HepG2 (cell line): ENCODE measurements at regions of chr2 and their contacts with region 1.

Region 1: DNA sequence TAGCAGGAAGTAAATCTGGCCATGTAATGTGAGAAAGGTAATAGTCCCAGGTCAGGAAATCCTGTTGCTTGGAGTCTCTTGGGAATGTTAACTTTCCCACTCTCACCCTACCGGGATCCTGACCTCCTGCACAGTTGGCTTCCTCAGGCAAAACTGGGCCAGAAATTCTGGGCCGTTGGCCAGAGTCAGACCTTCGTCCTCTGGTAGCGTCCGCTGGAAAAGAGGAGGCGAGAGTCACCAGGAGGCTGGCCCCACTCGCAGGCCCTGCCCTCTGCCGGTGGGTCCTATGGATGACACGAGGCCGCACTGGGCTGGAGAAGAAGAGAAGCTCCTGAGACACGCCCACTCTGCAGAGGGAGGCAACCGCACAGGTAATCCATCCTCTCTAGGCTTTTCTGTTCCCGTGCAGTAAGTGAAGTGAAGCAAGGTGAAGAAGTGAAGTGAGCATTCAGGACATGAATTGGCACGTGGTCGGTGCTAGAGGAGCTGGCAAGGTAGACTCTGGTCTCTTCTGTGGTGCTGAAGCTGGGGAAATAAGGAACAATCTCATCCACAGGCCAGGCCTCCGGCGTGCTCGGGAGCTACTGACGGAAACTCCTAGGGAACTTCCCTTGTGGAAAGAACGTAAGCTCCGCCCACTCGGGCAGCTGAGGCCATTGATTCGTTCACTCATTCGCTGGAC is 182.7 kb upstream of the GLI2 start:
- DNase-seq: peak; percentile 90
- ATAC-seq: peak; percentile 91
- H3K4me3 ChIP-seq: peak overlapping the region in 1 of 3 experiments; percentile 20; a peak in 3 of 6 replicates
- H3K27ac ChIP-seq: peak overlapping the region; percentile 44
- H3K4me1 ChIP-seq: peaks cover 92% of the 10 kb centered on the region
- H3K27me3 ChIP-seq: peaks cover 6 to 19% of the 10 kb centered on the region in 2 experiments; a peak in 4 of 5 replicates
- CTCF ChIP-seq: peak; percentile 99
- EP300 ChIP-seq: peak; percentile 20 to 36; a peak in 2 of 4 replicates
- POLR2A ChIP-seq: peak in 1 of 2 experiments; percentile 50; a peak in 1 of 4 replicates
- RAD21 ChIP-seq: peak; percentile 99

Region 2: DNA sequence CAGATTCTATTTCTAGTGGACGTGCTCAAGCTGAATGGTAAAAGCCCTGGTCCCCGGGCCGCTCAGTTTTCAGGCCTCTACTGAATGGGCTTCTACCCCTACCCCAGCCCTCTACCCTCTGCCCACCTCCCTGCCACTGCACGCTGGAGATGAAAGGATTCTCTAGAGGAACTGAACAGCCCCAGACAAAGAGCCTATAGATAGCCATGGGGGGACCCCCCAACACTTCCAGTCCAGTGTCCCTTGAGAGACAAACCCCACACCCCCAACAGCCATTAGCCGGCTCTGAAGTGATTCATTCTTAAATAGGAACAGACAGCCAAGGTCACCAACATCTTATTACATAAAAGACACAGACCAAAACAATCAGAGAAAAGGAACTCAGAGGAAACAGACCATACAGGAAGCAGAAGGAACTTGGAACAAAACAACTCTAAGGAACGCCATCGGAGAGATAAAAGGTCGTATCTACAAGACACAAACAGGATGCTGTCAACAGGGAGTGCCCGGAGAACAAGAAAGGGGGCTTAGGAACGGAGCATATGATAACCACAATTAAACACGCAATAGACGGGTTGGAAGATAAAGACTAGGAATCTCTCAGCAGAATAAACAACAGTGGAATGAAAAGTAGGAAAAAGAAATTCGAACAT is 1097.7 kb before region 1 on chr2:
- CTCF ChIA-PET with region 1: no interaction called
- POLR2A ChIA-PET with region 1: no interaction called
- in situ Hi-C with region 1: no loop called
- intact Hi-C with region 1: no loop called
- DNase-seq: no peak
- ATAC-seq: no peak
- H3K4me3 ChIP-seq: no peak overlapping the region
- H3K27ac ChIP-seq: no peak overlapping the region
- H3K4me1 ChIP-seq: peaks cover 8% of the 10 kb centered on the region; the same call in 1 of the 2 replicates
- H3K27me3 ChIP-seq: peaks cover 4 to 57% of the 10 kb centered on the region in 2 experiments
- CTCF ChIP-seq: no peak
- EP300 ChIP-seq: no peak
- POLR2A ChIP-seq: no peak
- RAD21 ChIP-seq: no peak

Region 3: GRCh38 chr2:120396013-120396885 is 156.7 kb before region 1 on chr2:
- CTCF ChIA-PET with region 1: no interaction called
- POLR2A ChIA-PET with region 1: interaction called, 3 read pairs
- in situ Hi-C with region 1: no loop called
- intact Hi-C with region 1: loop called (anchors 5 kb)
- DNase-seq: peak; percentile 44
- ATAC-seq: no peak
- H3K4me3 ChIP-seq: no peak overlapping the region
- H3K27ac ChIP-seq: no peak overlapping the region
- H3K4me1 ChIP-seq: peaks cover 60% of the 10 kb centered on the region
- H3K27me3 ChIP-seq: peaks cover 0 to 3% of the 10 kb centered on the region in 2 experiments; a peak in 2 of 5 replicates
- CTCF ChIP-seq: no peak
- EP300 ChIP-seq: no peak
- POLR2A ChIP-seq: no peak
- RAD21 ChIP-seq: no peak

Region 4: GRCh38 chr2:120503793-120504571 is 49.0 kb before region 1 on chr2:
- CTCF ChIA-PET with region 1: no interaction called
- POLR2A ChIA-PET with region 1: no interaction called
- in situ Hi-C with region 1: no loop called
- intact Hi-C with region 1: loop called (anchors 5 kb)
- DNase-seq: peak; percentile 59
- ATAC-seq: peak; percentile 72
- H3K4me3 ChIP-seq: 0 out of 6 replicates have a peak overlapping the region, but pooled peaks of 1 of the 3 experiments have one; percentile 10
- H3K27ac ChIP-seq: no peak overlapping the region
- H3K4me1 ChIP-seq: peaks cover 46% of the 10 kb centered on the region
- H3K27me3 ChIP-seq: peaks cover 2 to 70% of the 10 kb centered on the region in 2 experiments; a peak in 4 of 5 replicates
- CTCF ChIP-seq: peak; percentile 42
- EP300 ChIP-seq: no peak
- POLR2A ChIP-seq: no peak
- RAD21 ChIP-seq: peak; percentile 70; the same call in 1 of the 2 replicates

Region 5: DNA sequence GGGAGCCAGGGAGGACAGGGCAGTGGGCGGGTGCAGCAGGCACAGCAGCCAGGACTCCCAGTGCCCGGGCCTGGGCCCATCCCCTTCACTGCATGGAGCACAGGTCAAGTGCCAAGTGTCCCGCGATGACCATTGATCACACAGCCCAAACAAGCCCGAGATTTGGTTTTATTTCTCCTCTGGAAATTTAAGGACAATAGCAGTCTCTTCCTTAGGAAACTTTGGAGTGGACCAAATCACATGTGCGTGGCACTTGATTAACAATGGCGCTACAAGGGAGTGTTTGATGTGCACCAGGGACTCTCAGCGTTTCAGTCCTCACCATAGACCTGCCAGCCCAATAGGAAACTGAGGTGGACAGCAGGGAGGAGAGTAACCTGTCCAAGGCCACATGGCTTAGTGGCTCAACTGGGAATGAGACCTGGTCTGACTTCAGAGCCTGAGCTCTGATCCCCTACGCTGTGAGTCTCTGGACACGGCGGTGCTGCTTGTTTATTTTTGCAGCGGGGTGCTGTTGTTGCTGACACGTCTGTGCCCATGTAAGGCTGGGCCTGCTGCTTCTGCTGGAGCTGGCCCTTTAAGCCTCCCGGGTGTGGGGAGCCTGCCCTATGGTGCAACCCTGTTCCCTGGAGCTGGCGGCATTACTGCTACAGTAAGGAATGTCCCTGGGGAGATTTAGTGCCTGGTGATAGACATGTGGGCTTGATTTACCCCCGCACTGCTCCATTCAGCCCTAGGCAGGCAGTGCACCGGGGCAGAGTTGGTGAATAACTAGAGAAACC is 12.8 kb before region 1 on chr2:
- CTCF ChIA-PET with region 1: no interaction called
- POLR2A ChIA-PET with region 1: interaction called, 34 read pairs
- in situ Hi-C with region 1: no loop called
- intact Hi-C with region 1: no loop called
- DNase-seq: peak; percentile 94
- ATAC-seq: peak; percentile 93
- H3K4me3 ChIP-seq: peak overlapping the region in 2 of 3 experiments; percentile 11 to 34; a peak in 1 of 6 replicates
- H3K27ac ChIP-seq: peak overlapping the region; percentile 82
- H3K4me1 ChIP-seq: peaks cover 73% of the 10 kb centered on the region
- H3K27me3 ChIP-seq: peaks cover 0 to 17% of the 10 kb centered on the region in 2 experiments; a peak in 3 of 5 replicates
- CTCF ChIP-seq: 0 out of 2 replicates have a peak, but pooled peaks have one; percentile 20
- EP300 ChIP-seq: peak; percentile 30 to 69; a peak in 2 of 4 replicates
- POLR2A ChIP-seq: peak; percentile 59 to 78; a peak in 3 of 4 replicates
- RAD21 ChIP-seq: peak; percentile 54; the same call in 1 of the 2 replicates

Region 6: DNA sequence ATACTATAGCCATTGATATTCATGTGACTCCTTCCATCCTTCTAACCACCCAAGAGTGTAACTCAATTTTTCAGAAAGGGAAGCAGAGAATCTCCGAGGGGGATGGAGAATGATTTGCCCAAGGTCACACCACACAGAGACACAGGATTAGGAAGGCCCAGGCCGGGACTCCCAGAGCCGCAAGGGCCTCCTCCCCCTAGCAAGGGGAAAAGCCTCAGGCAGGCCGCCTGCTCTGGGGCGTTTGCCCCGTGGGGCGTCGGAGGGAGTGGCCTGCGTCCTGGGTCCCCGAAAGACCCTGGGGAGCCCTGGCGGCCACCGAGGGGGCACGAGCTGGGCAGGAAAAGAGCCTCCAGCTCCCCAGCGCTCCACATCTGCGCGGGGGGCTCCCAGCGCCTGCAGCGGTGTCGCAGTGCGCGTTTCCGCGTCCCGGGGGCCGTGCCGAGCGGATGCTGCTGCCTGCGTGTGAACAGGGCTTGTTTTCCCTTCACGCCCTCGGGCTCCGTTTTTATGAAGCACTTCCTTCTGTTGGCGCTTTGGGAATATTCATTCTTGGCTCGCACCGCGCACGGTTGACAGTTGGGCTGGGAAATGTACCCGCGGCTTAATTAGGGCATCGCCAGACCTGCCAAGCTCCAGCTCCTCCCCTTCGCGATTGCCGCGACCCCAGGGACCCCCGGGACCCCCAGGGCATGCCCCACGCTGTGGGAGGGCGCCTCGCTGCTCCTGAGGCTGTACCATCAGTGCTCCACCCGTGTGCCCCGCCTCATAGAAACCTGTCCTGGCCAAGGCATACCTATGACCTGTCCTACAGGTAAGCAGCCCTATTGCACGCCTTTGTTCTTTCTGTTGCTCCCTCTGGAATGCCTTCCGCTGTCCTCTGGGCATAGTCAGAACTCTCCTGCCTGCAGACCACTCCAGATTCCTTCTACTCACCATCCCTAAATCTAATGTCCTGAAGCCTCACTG is 23.9 kb after region 1 on chr2:
- CTCF ChIA-PET with region 1: no interaction called
- POLR2A ChIA-PET with region 1: no interaction called
- in situ Hi-C with region 1: no loop called
- intact Hi-C with region 1: no loop called
- DNase-seq: no peak
- ATAC-seq: no peak
- H3K4me3 ChIP-seq: no peak overlapping the region
- H3K27ac ChIP-seq: no peak overlapping the region
- H3K4me1 ChIP-seq: peaks cover 3% of the 10 kb centered on the region
- H3K27me3 ChIP-seq: peaks cover 14 to 98% of the 10 kb centered on the region in 2 experiments; a peak in 4 of 5 replicates
- CTCF ChIP-seq: no peak
- EP300 ChIP-seq: no peak
- POLR2A ChIP-seq: no peak
- RAD21 ChIP-seq: no peak

Region 7: DNA sequence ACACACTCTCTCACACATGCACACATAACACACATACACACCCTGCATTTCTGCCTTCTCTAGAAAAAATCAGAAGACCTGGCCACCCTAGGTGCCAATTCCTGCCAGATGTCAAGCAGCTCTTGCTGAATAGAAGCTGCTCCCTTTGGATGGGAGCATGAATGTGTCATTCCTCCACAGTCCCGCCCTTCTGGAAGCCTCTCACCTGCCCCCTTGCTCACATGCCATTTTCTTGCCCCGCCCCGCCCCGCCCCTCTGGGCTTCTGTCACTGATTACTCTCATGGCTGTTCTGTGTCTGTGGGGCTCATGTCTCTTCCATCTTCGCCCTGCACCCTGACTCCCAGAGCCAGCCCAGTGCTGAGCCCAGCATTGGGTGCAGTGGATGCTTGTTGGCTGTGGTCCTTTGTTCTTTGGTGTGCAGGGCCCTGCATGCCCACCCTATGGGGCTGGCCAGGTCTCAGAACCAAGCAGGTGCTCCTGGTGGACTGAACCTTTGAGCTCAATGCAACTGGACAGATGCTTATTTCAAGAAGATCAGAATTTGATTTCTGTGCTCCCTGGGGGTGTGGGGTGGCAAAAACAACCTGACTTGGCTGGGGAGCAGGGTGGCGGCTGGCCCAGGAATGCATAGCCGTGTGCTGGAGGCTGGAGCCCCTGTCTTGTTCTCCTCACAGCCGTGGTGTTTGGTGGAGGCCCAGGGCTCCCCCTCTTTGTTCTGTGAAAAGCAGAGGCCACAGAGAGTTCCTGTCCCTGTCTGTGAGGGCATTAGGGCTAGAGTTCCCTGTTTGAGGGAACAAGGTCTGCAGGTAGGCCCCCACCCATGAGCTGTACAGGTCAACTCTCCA is 42.1 kb after region 1 on chr2:
- CTCF ChIA-PET with region 1: no interaction called
- POLR2A ChIA-PET with region 1: interaction called, 4 read pairs
- in situ Hi-C with region 1: no loop called
- intact Hi-C with region 1: loop called (anchors 1 kb)
- DNase-seq: no peak
- ATAC-seq: no peak
- H3K4me3 ChIP-seq: no peak overlapping the region
- H3K27ac ChIP-seq: no peak overlapping the region
- H3K4me1 ChIP-seq: peaks cover 13% of the 10 kb centered on the region; the same call in 1 of the 2 replicates
- H3K27me3 ChIP-seq: peaks cover 11 to 89% of the 10 kb centered on the region in 2 experiments
- CTCF ChIP-seq: no peak
- EP300 ChIP-seq: no peak
- POLR2A ChIP-seq: no peak
- RAD21 ChIP-seq: no peak

Region 8: DNA sequence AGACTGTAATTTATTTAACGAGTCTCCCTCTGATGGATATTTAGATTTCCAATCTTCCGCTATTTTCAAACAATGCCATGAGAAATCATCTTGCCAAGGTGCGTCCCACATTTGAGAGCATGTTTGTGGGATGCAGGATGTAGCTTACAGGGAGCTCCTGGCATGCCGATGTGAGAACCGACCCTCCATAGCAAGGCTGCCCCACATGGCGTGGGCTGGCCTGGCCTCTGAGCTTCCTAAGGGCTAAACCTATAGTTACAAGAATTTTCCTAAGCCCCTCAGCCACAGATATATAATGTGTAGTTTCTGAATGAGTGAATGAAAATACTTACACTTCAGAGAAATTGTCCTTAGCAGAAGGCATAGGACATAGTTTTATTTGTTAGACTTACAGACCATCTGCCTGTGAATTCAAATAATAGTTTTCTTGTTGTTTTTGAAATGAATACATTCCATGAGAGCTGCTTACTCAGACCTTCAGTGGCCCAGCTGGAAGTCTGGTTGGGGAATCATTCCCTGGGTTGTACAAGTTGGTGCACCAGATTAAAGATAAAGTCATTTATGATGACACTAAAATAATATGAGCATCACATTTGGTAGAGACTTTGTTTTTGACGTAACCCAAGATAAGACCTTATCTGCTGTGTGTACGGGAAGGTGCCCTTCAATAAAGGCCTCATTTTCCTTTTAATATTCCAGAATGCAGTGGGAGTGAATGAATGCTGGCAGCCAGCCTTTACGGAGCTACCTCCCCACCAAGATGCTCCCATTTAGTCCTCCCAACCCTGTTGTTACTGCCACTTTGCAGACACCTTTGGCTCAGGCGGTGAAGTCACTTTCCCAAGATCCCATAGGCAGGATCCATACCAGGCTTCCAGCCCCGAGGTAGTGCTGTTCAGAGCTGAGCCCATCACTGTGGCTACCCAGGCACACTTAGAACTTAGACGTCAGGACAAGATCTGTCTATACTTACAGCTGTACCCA is 289.8 kb after region 1 on chr2:
- CTCF ChIA-PET with region 1: no interaction called
- POLR2A ChIA-PET with region 1: no interaction called
- in situ Hi-C with region 1: no loop called
- intact Hi-C with region 1: no loop called
- DNase-seq: no peak
- ATAC-seq: no peak
- H3K4me3 ChIP-seq: no peak overlapping the region
- H3K27ac ChIP-seq: no peak overlapping the region
- H3K4me1 ChIP-seq: no peaks in the 10 kb centered on the region
- H3K27me3 ChIP-seq: peaks cover 5 to 46% of the 10 kb centered on the region in 2 experiments; a peak in 4 of 5 replicates
- CTCF ChIP-seq: no peak
- EP300 ChIP-seq: no peak
- POLR2A ChIP-seq: no peak
- RAD21 ChIP-seq: no peak